A549 (cell line): ENCODE measurements at regions of chr2 and their contacts with region 1.

Region 1: DNA sequence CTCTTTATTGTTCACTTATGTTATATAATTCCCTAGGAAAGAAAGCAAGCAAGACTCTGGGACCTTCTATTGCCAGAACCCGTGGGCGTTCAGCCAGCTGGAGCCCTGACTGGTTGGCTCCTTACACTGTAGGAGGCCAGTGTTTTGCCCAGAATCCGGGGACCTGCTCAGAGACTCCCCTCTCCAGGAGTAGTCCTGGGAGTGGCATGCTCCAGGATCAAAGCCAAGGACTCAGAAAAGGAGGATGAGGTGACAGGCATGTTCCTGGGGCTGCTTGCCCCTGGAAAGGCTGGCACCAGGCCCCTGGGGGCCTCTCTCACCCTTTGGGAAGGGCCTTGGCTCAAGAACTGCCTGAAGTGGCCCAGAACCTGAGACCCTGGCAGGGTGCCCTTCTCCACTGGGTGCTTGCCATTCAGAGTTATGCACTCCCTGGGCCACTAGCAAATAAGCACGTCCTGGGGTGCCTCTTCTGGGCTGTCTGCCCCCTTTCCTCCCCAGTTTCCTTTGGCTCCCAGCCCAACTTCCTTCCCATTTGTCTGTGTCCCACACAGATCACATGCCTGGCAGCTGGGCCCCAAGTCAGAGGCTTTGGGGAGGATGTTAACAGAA is 19.6 kb upstream of the KIF3C start:
- DNase-seq: peak in 1 of 2 experiments; percentile 78
- ATAC-seq: peak; percentile 45 to 46
- H3K4me3 ChIP-seq: no peak overlapping the region
- H3K27ac ChIP-seq: peak overlapping the region; percentile 93 to 94
- H3K4me1 ChIP-seq: peaks cover 62% of the 10 kb centered on the region
- CTCF ChIP-seq: no peak
- EP300 ChIP-seq: peak; percentile 50 to 75; a peak in 2 of 5 replicates
- POLR2A ChIP-seq: no peak
- RAD21 ChIP-seq: 0 out of 5 replicates have a peak, but pooled peaks of 1 of the 2 experiments have one; percentile 26

Region 2: DNA sequence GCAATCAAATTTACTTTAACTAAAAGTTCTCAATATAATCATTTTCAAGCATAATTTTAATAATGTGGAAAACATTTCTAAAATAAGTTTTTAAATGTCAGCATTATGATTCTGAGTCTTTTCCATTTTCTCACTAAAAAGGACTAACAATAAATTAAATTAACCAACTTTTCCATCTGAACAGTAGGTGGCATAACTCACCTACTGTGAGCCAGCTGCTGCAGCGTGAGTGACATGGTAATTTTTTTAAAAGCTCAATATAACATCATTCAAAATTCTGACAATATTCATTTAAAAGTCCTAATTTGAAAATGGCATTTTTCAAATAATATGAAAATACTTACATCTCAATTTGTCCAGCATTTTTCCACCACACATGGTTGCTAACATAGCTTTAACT is 395.0 kb before region 1 on chr2:
- CTCF ChIA-PET with region 1: no interaction called
- POLR2A ChIA-PET with region 1: no interaction called
- DNase-seq: peak; percentile 27 to 60
- ATAC-seq: peak; percentile 68 to 78; a peak in 5 of 6 replicates
- H3K4me3 ChIP-seq: no peak overlapping the region
- H3K27ac ChIP-seq: no peak overlapping the region
- H3K4me1 ChIP-seq: peaks cover 12% of the 10 kb centered on the region
- CTCF ChIP-seq: peak; percentile 98
- EP300 ChIP-seq: no peak
- POLR2A ChIP-seq: no peak
- RAD21 ChIP-seq: peak; percentile 97 to 98

Region 3: DNA sequence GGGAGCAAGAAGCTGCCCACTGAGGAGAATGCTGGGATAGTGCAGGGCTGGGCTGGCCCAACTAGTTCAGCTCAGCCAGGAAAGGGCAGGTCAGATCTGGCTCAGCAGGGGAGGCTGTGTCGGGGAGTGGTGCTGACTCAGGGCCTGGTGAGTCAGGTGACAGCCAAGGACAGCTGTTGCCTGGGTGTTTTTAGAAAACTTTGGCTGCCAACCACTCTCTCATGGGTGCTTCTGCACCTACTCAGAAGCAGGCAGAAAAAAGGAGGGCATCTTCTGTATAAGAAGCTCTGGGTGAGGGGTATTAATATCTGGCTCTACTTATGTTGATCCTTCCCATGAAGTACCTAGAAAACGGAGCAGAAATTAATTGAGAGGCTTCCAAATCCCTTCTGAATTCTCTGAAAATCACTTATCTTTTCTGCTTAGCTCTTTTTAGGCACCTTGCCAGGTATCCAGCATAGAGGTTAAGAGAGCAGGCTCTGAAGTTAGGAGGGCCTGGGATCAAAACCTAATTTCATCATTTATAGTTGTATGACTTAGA is 16.4 kb after region 1 on chr2:
- CTCF ChIA-PET with region 1: interaction called, 15 read pairs
- POLR2A ChIA-PET with region 1: interaction called, 10 read pairs
- DNase-seq: peak; percentile 95
- ATAC-seq: peak; percentile 98 to 99
- H3K4me3 ChIP-seq: no peak overlapping the region
- H3K27ac ChIP-seq: peak overlapping the region; percentile 73 to 93
- H3K4me1 ChIP-seq: peaks cover 73% of the 10 kb centered on the region
- CTCF ChIP-seq: no peak
- EP300 ChIP-seq: peak; percentile 41 to 44; a peak in 2 of 5 replicates
- POLR2A ChIP-seq: no peak
- RAD21 ChIP-seq: peak in 1 of 2 experiments; percentile 21; a peak in 2 of 5 replicates

Region 4: GRCh38 chr2:26561918-26562810 is 560.3 kb after region 1 on chr2:
- CTCF ChIA-PET with region 1: no interaction called
- POLR2A ChIA-PET with region 1: no interaction called
- DNase-seq: peak; percentile 64 to 92
- ATAC-seq: peak; percentile 84 to 93
- H3K4me3 ChIP-seq: peak overlapping the region; percentile 50
- H3K27ac ChIP-seq: peak overlapping the region; percentile 51 to 76
- H3K4me1 ChIP-seq: peaks cover 8% of the 10 kb centered on the region; the same call in 1 of the 3 replicates
- CTCF ChIP-seq: peak; percentile 51
- EP300 ChIP-seq: no peak
- POLR2A ChIP-seq: no peak
- RAD21 ChIP-seq: peak; percentile 13 to 49; a peak in 3 of 5 replicates